ENCODE measurements at regions of chr14 and their contacts with region 1.

Region 1: GRCh38 chr14:39339003-39339402 is 93.2 kb downstream of the FBXO33 start:
- DNase-seq: no peak
- ATAC-seq: no peak

Region 2: GRCh38 chr14:39383026-39383660 is 44.1 kb after region 1 on chr14:
- intact Hi-C with region 1: loop called (anchors 1 kb)
- DNase-seq: no peak
- ATAC-seq: no peak

Region 3: GRCh38 chr14:39406560-39406959 is 67.6 kb after region 1 on chr14:
- intact Hi-C with region 1: no loop called
- DNase-seq: no peak
- ATAC-seq: no peak

Region 4: DNA sequence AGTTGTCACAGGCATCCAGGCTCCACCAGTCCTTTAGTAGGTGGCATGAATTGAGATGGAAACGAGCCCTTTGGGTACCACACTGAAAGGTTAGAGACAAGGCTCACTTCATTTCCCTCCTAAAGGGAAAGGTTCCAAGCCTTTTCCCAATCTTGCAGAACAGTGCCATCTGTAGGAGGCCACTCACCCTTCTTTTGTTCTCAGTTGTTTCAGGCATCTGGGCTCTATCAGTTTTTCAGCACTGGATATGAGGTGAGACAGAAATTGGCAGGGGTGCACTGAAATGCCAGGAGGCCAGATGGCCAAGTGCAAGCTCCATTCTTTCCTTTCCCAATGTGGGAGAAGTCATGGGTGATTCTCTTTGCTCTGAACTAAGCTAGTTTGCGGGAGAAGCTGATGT is 78.0 kb after region 1 on chr14:
- intact Hi-C with region 1: no loop called
- DNase-seq: no peak
- ATAC-seq: no peak

Region 5: GRCh38 chr14:39555749-39556148 is 216.7 kb after region 1 on chr14:
- intact Hi-C with region 1: no loop called
- DNase-seq: no peak
- ATAC-seq: no peak

Measured in sciatic nerve (tissue), 2 donors.